GM12878 (cell line): ENCODE measurements at regions of chr1 and their contacts with region 1.

Region 1: GRCh38 chr1:183850852-183851251 is 45.9 kb downstream of the RGL1 start:
- DNase-seq: no peak
- ATAC-seq: no peak
- H3K4me3 ChIP-seq: no peak overlapping the region
- H3K27ac ChIP-seq: no peak overlapping the region
- H3K4me1 ChIP-seq: no peaks in the 10 kb centered on the region; the same call in 1 of the 2 replicates
- H3K27me3 ChIP-seq: no peaks in the 10 kb centered on the region
- CTCF ChIP-seq: no peak
- EP300 ChIP-seq: no peak
- POLR2A ChIP-seq: no peak
- RAD21 ChIP-seq: no peak

Region 2: DNA sequence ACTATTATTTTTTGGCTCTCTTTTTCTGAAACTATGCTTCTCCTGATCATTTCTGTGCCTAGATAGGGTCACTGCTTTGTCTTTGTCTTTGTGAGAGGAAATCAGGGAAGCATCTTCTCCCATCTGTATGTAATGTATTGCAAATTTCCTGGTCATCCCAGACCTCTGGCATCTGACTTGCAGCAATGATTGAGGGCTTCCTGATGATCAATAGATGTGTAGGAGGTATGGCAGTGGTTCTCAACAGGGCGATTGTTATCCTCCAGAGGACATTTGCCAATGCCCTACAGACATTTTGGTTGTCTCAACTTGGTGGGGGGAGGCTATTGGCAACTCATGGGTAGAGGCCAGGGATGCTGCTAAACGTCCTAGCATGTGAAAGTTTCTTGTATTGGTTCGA is 18.8 kb after region 1 on chr1:
- CTCF ChIA-PET with region 1: interaction called, 3 read pairs
- POLR2A ChIA-PET with region 1: interaction called, 3 read pairs
- RAD21 ChIA-PET with region 1: no interaction called
- SMC1A ChIA-PET with region 1: interaction called, 14 read pairs
- in situ Hi-C with region 1: no loop called
- intact Hi-C with region 1: no loop called
- DNase-seq: no peak
- ATAC-seq: no peak
- H3K4me3 ChIP-seq: no peak overlapping the region
- H3K27ac ChIP-seq: no peak overlapping the region
- H3K4me1 ChIP-seq: 0 out of 2 replicates have a peak, but pooled peaks cover 4% of the 10 kb centered on the region
- H3K27me3 ChIP-seq: no peaks in the 10 kb centered on the region
- CTCF ChIP-seq: no peak
- EP300 ChIP-seq: no peak
- POLR2A ChIP-seq: no peak
- RAD21 ChIP-seq: no peak